ENCODE measurements at regions of chr16 and their contacts with region 1.

Region 1: GRCh38 chr16:76278980-76279379 is 1.8 kb downstream of the CNTNAP4 start:
- ATAC-seq: peak in 6 of 8 experiments; percentile 44 to 89 (median 60)
- H3K4me3 ChIP-seq: peak overlapping the region in 1 of 5 donors; percentile 12
- H3K27ac ChIP-seq: no peak overlapping the region
- H3K4me1 ChIP-seq: peaks cover 0 to 19% of the 10 kb centered on the region in 2 donors

Region 2: DNA sequence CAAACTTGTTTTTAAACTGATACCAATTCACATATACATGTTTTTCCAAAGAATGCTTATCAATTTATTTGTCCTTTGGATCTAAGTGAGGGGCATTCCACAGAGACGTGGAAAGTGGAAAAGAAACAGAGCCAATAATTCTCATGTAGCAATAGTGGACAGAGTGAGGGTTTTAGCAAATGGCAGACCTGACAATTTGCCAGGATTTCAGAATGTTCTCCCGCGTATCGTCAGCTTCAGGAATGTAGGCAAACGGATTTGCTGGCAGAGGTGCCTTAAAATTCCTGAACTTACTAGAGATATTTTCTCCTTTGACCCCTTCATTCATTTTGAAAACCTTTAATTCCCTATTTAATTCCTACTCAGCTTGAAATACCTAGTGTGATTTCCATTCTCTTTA is 359.3 kb before region 1 on chr16:
- in situ Hi-C with region 1: no loop called
- ATAC-seq: no peak
- H3K4me3 ChIP-seq: no peak overlapping the region
- H3K27ac ChIP-seq: no peak overlapping the region
- H3K4me1 ChIP-seq: peaks cover 10 to 34% of the 10 kb centered on the region in 2 donors

Region 3: GRCh38 chr16:76381096-76381495 is 102.1 kb after region 1 on chr16:
- in situ Hi-C with region 1: no loop called
- ATAC-seq: no peak
- H3K4me3 ChIP-seq: no peak overlapping the region
- H3K27ac ChIP-seq: no peak overlapping the region
- H3K4me1 ChIP-seq: peaks cover 0 to 5% of the 10 kb centered on the region in 2 donors

Region 4: GRCh38 chr16:76639685-76640289 is 360.8 kb after region 1 on chr16:
- in situ Hi-C with region 1: loop called in 1 of 9 experiments (anchors 25 kb)
- ATAC-seq: peak in 6 of 8 experiments; percentile 13 to 83 (median 56)
- H3K4me3 ChIP-seq: no peak overlapping the region
- H3K27ac ChIP-seq: no peak overlapping the region
- H3K4me1 ChIP-seq: no peaks in the 10 kb centered on the region